Activated CD4-positive, alpha-beta T cell treated with anti-CD3 and anti-CD28 coated beads, Interleukin-2, amount 10 ng/mL, durations not matched to agents 24 days and 14 days (primary cell): ENCODE measurements at regions of chr15 and their contacts with region 1.

Region 1: GRCh38 chr15:64046347-64047153 is at the start of gene DAPK2:
- DNase-seq: peak; percentile 93
- H3K4me3 Mint-ChIP-seq: peak within 1 kb of the TSS; percentile 79
- H3K27ac Mint-ChIP-seq: peak within 1 kb of the TSS; percentile 25
- H3K4me1 Mint-ChIP-seq: peaks cover 20% of the 10 kb centered on the region
- H3K27me3 Mint-ChIP-seq: peaks cover 34% of the 10 kb centered on the region
- total RNA-seq, gene DAPK2: 3.7 and 4.3 TPM in 2 replicates

Region 2: GRCh38 chr15:63638839-63639238 is 407.7 kb before region 1 on chr15:
- intact Hi-C with region 1: no loop called
- DNase-seq: no peak
- H3K4me3 Mint-ChIP-seq: no peak overlapping the region
- H3K27ac Mint-ChIP-seq: no peak overlapping the region
- H3K4me1 Mint-ChIP-seq: peaks cover 11% of the 10 kb centered on the region
- H3K27me3 Mint-ChIP-seq: no peaks in the 10 kb centered on the region

Region 3: GRCh38 chr15:63752075-63752684 is 294.4 kb before region 1 on chr15:
- intact Hi-C with region 1: loop called (anchors 1 kb)
- DNase-seq: peak; percentile 85
- H3K4me3 Mint-ChIP-seq: no peak overlapping the region
- H3K27ac Mint-ChIP-seq: peak overlapping the region; percentile 44
- H3K4me1 Mint-ChIP-seq: peaks cover 8% of the 10 kb centered on the region
- H3K27me3 Mint-ChIP-seq: no peaks in the 10 kb centered on the region

Region 4: DNA sequence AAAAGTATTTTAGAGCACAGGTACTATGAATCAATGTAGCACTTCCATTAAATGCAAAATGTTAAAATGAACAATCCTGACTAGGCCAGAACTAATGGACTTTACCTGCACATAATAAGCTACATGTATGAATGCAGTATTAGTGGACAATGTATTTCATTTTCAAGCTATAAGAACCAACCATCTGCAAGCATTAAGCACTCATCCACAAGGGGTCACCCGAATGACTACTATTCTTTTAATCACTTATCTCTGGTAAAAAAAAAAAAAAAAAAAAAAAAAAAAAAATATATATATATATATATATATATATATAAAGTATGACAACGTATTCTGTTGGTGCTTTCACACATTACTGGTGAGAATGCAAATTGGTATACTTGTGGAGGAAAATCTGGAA is 220.0 kb before region 1 on chr15:
- intact Hi-C with region 1: loop called (anchors 5 kb)
- DNase-seq: peak; percentile 67
- H3K4me3 Mint-ChIP-seq: peak overlapping the region; percentile 67
- H3K27ac Mint-ChIP-seq: peak overlapping the region; percentile 78
- H3K4me1 Mint-ChIP-seq: peaks cover 55% of the 10 kb centered on the region
- H3K27me3 Mint-ChIP-seq: no peaks in the 10 kb centered on the region

Region 5: GRCh38 chr15:63939531-63940130 is 106.9 kb before region 1 on chr15:
- intact Hi-C with region 1: loop called (anchors 5 kb)
- DNase-seq: peak; percentile 77
- H3K4me3 Mint-ChIP-seq: peak overlapping the region; percentile 68
- H3K27ac Mint-ChIP-seq: peak overlapping the region; percentile 86
- H3K4me1 Mint-ChIP-seq: peaks cover 40% of the 10 kb centered on the region
- H3K27me3 Mint-ChIP-seq: no peaks in the 10 kb centered on the region

Region 6: GRCh38 chr15:64010719-64011118 is 35.8 kb before region 1 on chr15:
- intact Hi-C with region 1: loop called (anchors 5 kb)
- DNase-seq: peak; percentile 94
- H3K4me3 Mint-ChIP-seq: peak overlapping the region; percentile 72
- H3K27ac Mint-ChIP-seq: peak overlapping the region; percentile 88
- H3K4me1 Mint-ChIP-seq: peaks cover 52% of the 10 kb centered on the region
- H3K27me3 Mint-ChIP-seq: no peaks in the 10 kb centered on the region

Region 7: DNA sequence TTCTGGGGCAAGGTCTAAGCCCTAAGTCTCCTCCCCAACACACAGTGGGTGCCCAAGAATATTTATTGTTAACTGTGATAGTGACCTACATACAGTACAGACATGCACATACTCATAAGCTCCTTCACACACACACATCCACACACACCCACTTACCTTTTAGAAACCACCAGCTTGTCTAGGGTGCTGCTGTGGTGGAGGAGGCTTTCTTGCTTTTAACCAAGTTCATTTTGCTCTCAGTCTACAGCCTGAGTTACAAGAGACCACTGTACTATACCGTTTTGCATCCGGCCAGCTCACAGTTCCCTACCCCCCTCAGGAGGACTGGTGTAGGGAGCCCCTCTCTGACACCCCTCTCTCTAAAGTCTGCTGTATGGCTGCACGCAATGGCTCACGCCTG is 16.9 kb before region 1 on chr15:
- intact Hi-C with region 1: loop called (anchors 2 kb)
- DNase-seq: no peak
- H3K4me3 Mint-ChIP-seq: no peak overlapping the region
- H3K27ac Mint-ChIP-seq: no peak overlapping the region
- H3K4me1 Mint-ChIP-seq: peaks cover 21% of the 10 kb centered on the region
- H3K27me3 Mint-ChIP-seq: no peaks in the 10 kb centered on the region